ENCODE measurements at regions of chr12 and their contacts with region 1.

Region 1: DNA sequence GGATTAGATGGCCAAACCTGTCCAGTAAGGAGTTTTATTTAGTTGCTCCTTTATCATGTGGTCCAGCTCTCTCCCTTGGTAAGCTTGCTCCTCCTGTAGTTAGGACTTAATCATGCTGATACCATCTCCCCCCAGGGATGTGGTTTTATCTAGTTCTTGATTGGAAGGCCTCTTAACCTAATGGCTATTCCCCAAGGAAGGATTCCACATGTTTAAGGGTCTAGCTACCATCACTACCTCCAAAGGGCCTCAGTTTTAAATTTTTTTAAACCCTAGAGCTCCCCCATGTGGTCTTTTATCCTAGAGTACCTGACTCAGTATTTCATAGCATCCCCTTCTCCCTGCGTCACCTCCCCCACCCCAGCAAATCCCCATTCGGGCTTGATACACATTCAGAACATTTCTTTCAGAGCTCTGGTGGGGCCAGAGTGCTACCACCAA is 22.5 kb downstream of the MAP3K12 start:
- DNase-seq: peak in 1 of 5 donors; percentile 10
- H3K4me3 ChIP-seq: no peak overlapping the region
- H3K4me3 Mint-ChIP-seq: no peak overlapping the region
- H3K27ac ChIP-seq: no peak overlapping the region
- H3K27ac Mint-ChIP-seq: peak overlapping the region in 7 of 8 donors; percentile 21 to 86 (median 67)
- H3K4me1 ChIP-seq: peaks cover 5% of the 10 kb centered on the region
- H3K4me1 Mint-ChIP-seq: peaks cover 36 to 59% (median 46%) of the 10 kb centered on the region in 3 donors
- H3K27me3 ChIP-seq: no peaks in the 10 kb centered on the region
- H3K27me3 Mint-ChIP-seq: no peaks in the 10 kb centered on the region

Region 2: DNA sequence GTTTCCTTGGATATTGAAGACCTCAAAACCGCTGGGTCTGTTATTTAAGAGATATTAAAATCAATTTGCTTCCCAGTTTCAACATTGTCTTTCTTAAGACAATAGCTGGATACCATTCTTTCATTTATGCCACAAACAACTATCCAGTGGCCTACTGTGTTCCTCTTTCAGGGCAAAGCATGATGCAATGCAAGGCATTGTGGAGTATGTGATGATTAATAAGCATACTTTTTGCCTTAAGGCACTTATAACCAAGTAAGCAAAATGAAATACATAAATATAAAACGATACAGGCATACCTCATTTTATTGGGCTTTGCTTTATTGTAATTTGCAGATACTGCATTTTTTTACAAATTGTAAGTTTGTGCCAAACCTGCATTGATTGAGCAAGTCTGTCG is 1840.2 kb before region 1 on chr12:
- CTCF ChIA-PET with region 1: no interaction called
- POLR2A ChIA-PET with region 1: no interaction called
- DNase-seq: no peak
- H3K4me3 ChIP-seq: no peak overlapping the region
- H3K4me3 Mint-ChIP-seq: no peak overlapping the region
- H3K27ac ChIP-seq: no peak overlapping the region
- H3K27ac Mint-ChIP-seq: no peak overlapping the region
- H3K4me1 ChIP-seq: no peaks in the 10 kb centered on the region
- H3K4me1 Mint-ChIP-seq: no peaks in the 10 kb centered on the region
- H3K27me3 ChIP-seq: no peaks in the 10 kb centered on the region
- H3K27me3 Mint-ChIP-seq: peaks cover 4 to 14% of the 10 kb centered on the region in 2 donors

Region 3: GRCh38 chr12:53492830-53493611 is 16.2 kb after region 1 on chr12:
- CTCF ChIA-PET with region 1: interaction called, 10 read pairs
- POLR2A ChIA-PET with region 1: interaction called, 3 read pairs
- DNase-seq: peak; percentile 79 to 93 (median 82)
- H3K4me3 ChIP-seq: peak overlapping the region; percentile 67
- H3K4me3 Mint-ChIP-seq: peak overlapping the region; percentile 87 to 96 (median 92)
- H3K27ac ChIP-seq: peak overlapping the region; percentile 51
- H3K27ac Mint-ChIP-seq: peak overlapping the region; percentile 85 to 98 (median 94)
- H3K4me1 ChIP-seq: peaks cover 16% of the 10 kb centered on the region
- H3K4me1 Mint-ChIP-seq: peaks cover 21 to 54% (median 39%) of the 10 kb centered on the region in 3 donors
- H3K27me3 ChIP-seq: no peaks in the 10 kb centered on the region
- H3K27me3 Mint-ChIP-seq: no peaks in the 10 kb centered on the region

Region 4: GRCh38 chr12:53603804-53604203 is 127.0 kb after region 1 on chr12:
- CTCF ChIA-PET with region 1: no interaction called
- POLR2A ChIA-PET with region 1: no interaction called
- DNase-seq: no peak
- H3K4me3 ChIP-seq: no peak overlapping the region
- H3K4me3 Mint-ChIP-seq: no peak overlapping the region
- H3K27ac ChIP-seq: no peak overlapping the region
- H3K27ac Mint-ChIP-seq: peak overlapping the region in 4 of 8 donors; percentile 1 to 64 (median 28)
- H3K4me1 ChIP-seq: no peaks in the 10 kb centered on the region
- H3K4me1 Mint-ChIP-seq: peaks cover 12 to 32% (median 30%) of the 10 kb centered on the region in 3 donors
- H3K27me3 ChIP-seq: no peaks in the 10 kb centered on the region
- H3K27me3 Mint-ChIP-seq: no peaks in the 10 kb centered on the region

Measured in CD8-positive, alpha-beta memory T cell (primary cell).